ENCODE measurements at regions of chr11 and their contacts with region 1.

Region 1: GRCh38 chr11:22829231-22830081 is at the start of gene SVIP:
- DNase-seq: peak; percentile 88 to 97 (median 92)
- ATAC-seq: peak; percentile 92
- H3K4me3 ChIP-seq: peak within 1 kb of the TSS; percentile 84
- H3K4me3 Mint-ChIP-seq: peak within 1 kb of the TSS; percentile 97
- H3K27ac ChIP-seq: peak within 1 kb of the TSS; percentile 66 to 81
- H3K27ac Mint-ChIP-seq: peak within 1 kb of the TSS; percentile 92
- H3K4me1 ChIP-seq: peaks cover 3% of the 10 kb centered on the region
- H3K4me1 Mint-ChIP-seq: peaks cover 22% of the 10 kb centered on the region
- H3K27me3 ChIP-seq: no peaks in the 10 kb centered on the region
- H3K27me3 Mint-ChIP-seq: no peaks in the 10 kb centered on the region
- CTCF ChIP-seq: peak; percentile 66
- total RNA-seq, gene SVIP: 58.1 to 67.3 TPM

Region 2: DNA sequence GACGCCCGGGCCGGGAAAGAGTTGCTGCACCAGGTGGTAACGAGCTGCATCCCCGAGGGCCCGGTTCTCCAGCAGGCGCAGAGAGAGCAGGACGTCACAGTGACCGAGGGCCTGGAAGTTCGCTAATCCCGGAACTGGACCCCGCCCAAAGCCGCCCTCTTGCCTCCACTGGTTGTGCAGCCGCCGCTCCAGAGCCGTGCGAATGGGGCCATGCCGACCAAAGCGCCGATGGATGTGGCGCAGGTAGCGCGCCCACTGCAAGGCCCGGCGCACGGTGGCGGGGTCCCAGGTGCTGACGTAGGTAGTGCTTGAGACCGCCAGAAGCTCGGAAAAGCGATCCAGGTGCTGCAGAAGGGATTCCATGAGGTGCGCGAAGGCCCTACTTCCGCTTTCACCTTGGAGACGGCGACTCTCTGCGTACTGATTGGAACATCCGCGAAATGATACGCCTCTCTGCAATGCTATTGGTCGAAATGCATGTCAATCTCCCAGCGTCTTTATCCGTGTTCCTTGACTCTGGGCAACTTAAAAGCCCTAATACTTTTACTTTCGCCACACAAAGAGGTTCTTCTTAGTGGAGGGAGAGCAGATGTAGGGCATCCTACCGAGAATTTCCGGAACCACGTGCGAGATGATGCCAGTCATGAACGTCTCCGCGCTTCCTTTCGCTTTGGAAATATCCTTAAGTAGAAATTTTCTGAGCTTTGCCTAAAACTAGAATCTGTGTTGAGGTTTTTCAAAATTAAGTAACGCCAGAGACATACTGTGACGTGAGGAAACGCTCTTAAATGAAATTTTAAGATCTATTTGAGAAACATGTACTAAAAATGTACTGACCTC is 203.8 kb before region 1 on chr11 and contains the start of gene FANCF:
- CTCF ChIA-PET with region 1: interaction called, 4 read pairs
- POLR2A ChIA-PET with region 1: interaction called, 31 read pairs
- intact Hi-C with region 1: loop called (anchors 2 to 5 kb)
- DNase-seq: peak; percentile 82 to 99 (median 94)
- ATAC-seq: peak; percentile 93
- H3K4me3 ChIP-seq: peak within 1 kb of the TSS; percentile 92
- H3K4me3 Mint-ChIP-seq: peak within 1 kb of the TSS; percentile 97
- H3K27ac ChIP-seq: peak within 1 kb of the TSS; percentile 91 to 96
- H3K27ac Mint-ChIP-seq: peak within 1 kb of the TSS; percentile 94
- H3K4me1 ChIP-seq: peaks cover 16% of the 10 kb centered on the region
- H3K4me1 Mint-ChIP-seq: peaks cover 54% of the 10 kb centered on the region
- H3K27me3 ChIP-seq: no peaks in the 10 kb centered on the region
- H3K27me3 Mint-ChIP-seq: no peaks in the 10 kb centered on the region
- CTCF ChIP-seq: no peak
- total RNA-seq, gene FANCF: 7.2 to 7.4 TPM

Region 3: DNA sequence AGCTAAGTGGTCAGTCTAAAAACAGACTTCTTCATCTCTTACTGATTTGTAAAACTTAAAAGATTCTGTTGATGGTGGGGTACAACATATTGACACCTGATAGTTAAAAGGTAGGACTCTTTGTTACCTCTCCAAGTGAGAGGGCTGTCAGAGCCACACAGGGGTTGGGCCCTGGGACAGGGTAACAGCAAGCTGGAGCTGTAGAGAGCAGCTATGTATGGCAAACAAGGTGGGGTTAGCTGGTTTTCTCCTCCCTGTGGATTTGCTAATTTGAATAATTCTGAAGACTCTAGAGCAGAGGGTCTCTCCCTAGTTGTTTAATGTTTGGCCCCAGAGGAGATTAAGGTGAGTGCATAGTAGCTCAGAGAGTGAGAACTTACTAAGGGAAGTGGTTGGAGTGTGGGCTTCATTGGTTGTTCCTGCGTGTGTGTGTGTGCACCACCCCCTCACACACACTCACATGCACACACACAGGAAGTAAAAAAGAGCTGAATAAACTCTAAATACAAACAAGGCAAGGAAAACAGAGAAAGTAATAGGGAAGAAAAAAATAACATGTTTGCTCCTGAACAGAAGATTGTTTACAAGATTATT is 172.3 kb before region 1 on chr11:
- CTCF ChIA-PET with region 1: no interaction called
- POLR2A ChIA-PET with region 1: interaction called, 11 read pairs
- intact Hi-C with region 1: no loop called
- DNase-seq: peak in 2 of 14 experiments; percentile 22 to 59
- ATAC-seq: peak; percentile 89
- H3K4me3 ChIP-seq: no peak overlapping the region
- H3K4me3 Mint-ChIP-seq: peak overlapping the region; percentile 5
- H3K27ac ChIP-seq: no peak overlapping the region
- H3K27ac Mint-ChIP-seq: peak overlapping the region; percentile 55
- H3K4me1 ChIP-seq: peaks cover 7% of the 10 kb centered on the region
- H3K4me1 Mint-ChIP-seq: peaks cover 30% of the 10 kb centered on the region
- H3K27me3 ChIP-seq: no peaks in the 10 kb centered on the region
- H3K27me3 Mint-ChIP-seq: peaks cover 4% of the 10 kb centered on the region
- CTCF ChIP-seq: no peak

Region 4: GRCh38 chr11:22690871-22691270 is 138.6 kb before region 1 on chr11:
- CTCF ChIA-PET with region 1: no interaction called
- POLR2A ChIA-PET with region 1: interaction called, 14 read pairs
- intact Hi-C with region 1: no loop called
- DNase-seq: peak in 10 of 14 experiments; percentile 3 to 59 (median 24)
- ATAC-seq: peak; percentile 98
- H3K4me3 ChIP-seq: peak overlapping the region; percentile 22
- H3K4me3 Mint-ChIP-seq: peak overlapping the region; percentile 81
- H3K27ac ChIP-seq: no peak overlapping the region
- H3K27ac Mint-ChIP-seq: peak overlapping the region; percentile 68
- H3K4me1 ChIP-seq: no peaks in the 10 kb centered on the region
- H3K4me1 Mint-ChIP-seq: peaks cover 38% of the 10 kb centered on the region
- H3K27me3 ChIP-seq: no peaks in the 10 kb centered on the region
- H3K27me3 Mint-ChIP-seq: no peaks in the 10 kb centered on the region
- CTCF ChIP-seq: no peak